ENCODE measurements at regions of chr14 and their contacts with region 1.

Region 1: GRCh38 chr14:24984846-24985589 is 64.9 kb downstream of the STXBP6 start:
- DNase-seq: peak; percentile 70
- H3K4me3 ChIP-seq: no peak overlapping the region
- H3K27ac ChIP-seq: no peak overlapping the region
- H3K4me1 ChIP-seq: peaks cover 2% of the 10 kb centered on the region
- H3K27me3 ChIP-seq: no peaks in the 10 kb centered on the region
- CTCF ChIP-seq: no peak
- POLR2A ChIP-seq: no peak

Region 2: GRCh38 chr14:24935796-24936195 is 49.2 kb before region 1 on chr14:
- CTCF ChIA-PET with region 1: no interaction called
- POLR2A ChIA-PET with region 1: no interaction called
- dilution Hi-C with region 1: no loop called
- intact Hi-C with region 1: loop called (anchors 2 kb)
- DNase-seq: no peak
- H3K4me3 ChIP-seq: no peak overlapping the region
- H3K27ac ChIP-seq: no peak overlapping the region
- H3K4me1 ChIP-seq: peaks cover 10% of the 10 kb centered on the region
- H3K27me3 ChIP-seq: no peaks in the 10 kb centered on the region
- CTCF ChIP-seq: no peak
- POLR2A ChIP-seq: no peak

Region 3: DNA sequence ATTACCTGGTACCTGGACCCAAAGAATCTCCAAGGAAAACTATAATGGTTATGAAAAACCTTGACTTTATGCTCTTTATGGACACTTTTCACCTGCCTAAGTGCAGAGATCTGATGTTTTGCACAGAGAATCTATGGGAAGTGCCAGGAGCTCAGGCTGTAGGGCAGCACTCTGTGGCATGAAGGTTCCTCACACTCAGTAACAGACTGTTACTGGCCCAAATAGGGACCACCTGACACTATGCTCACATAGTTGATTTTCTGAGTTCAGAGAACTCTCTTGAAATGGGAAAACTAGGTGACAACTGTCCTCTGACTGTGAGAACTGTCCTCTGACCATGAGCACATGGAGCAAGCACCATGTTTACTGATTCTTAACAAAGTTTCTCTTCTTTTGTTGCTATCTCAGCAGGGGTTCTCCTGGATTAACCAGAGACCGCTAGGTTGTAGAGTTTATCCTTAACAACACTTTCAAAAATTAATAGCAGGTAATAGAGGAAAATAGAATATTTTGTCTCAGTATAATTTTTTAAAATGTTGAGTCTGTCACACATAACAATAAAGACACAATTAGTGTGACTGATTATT is 36.7 kb before region 1 on chr14:
- CTCF ChIA-PET with region 1: no interaction called
- POLR2A ChIA-PET with region 1: no interaction called
- dilution Hi-C with region 1: no loop called
- intact Hi-C with region 1: no loop called
- DNase-seq: no peak
- H3K4me3 ChIP-seq: no peak overlapping the region
- H3K27ac ChIP-seq: no peak overlapping the region
- H3K4me1 ChIP-seq: no peaks in the 10 kb centered on the region
- H3K27me3 ChIP-seq: no peaks in the 10 kb centered on the region
- CTCF ChIP-seq: no peak
- POLR2A ChIP-seq: no peak

Measured in endothelial cell of umbilical vein (primary cell).